CD14-positive monocyte (primary cell): ENCODE measurements at regions of chr15 and their contacts with region 1.

Region 1: DNA sequence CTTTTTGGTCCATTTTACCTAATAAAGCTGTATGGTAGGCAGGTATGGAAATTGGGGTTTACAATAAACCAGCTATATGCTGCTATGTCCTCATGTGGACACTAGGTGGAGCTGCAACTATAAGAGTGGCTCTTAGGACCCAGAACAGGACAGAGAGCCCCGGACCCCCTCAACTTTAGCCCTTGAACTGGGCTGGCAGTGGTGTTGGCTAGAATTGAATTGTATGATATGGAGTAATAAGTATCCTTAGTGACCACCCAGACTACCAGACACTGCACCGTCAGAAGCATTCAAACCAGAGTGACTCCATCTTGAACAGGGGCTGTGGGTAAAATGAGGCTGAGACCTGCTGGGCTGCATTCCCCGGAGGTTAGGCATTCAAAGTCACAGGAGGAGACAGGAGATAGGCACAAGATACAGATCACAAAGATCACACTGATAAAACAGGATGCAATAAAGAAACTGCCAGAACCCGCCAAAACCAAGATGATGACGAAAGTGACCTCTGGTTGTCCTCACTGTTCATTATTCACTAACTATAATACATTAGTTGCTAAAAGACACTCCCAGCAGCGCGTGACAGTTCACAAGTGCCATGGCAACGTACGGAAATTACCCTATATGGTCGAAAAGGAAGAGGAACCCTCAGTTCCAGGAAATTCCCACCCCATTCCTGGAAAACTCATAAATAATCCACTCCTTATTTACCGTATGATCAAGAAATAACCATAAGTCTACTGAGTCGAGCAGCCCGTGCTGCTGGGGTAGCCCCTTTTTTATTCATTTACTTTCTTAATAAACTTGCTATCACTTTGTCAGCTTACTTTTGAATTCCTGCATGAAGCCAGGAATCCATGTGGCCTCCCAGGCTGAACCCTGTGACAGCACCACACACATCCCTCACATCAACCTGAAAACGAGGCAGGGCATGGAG is 68.7 kb upstream of the BLM start:
- DNase-seq: peak; percentile 76 to 95 (median 87)
- H3K4me3 ChIP-seq: peak overlapping the region in 1 of 3 experiments; percentile 60
- H3K4me3 Mint-ChIP-seq: peak overlapping the region; percentile 68 to 85
- H3K27ac ChIP-seq: peak overlapping the region; percentile 47 to 50
- H3K27ac Mint-ChIP-seq: peak overlapping the region; percentile 88 to 95 (median 91)
- H3K4me1 ChIP-seq: peaks cover 23 to 29% of the 10 kb centered on the region in 2 donors
- H3K4me1 Mint-ChIP-seq: peaks cover 35% of the 10 kb centered on the region
- H3K27me3 ChIP-seq: no peaks in the 10 kb centered on the region
- H3K27me3 Mint-ChIP-seq: peaks cover 0 to 3% (median 1%) of the 10 kb centered on the region in 3 donors
- CTCF ChIP-seq: peak; percentile 98

Region 2: DNA sequence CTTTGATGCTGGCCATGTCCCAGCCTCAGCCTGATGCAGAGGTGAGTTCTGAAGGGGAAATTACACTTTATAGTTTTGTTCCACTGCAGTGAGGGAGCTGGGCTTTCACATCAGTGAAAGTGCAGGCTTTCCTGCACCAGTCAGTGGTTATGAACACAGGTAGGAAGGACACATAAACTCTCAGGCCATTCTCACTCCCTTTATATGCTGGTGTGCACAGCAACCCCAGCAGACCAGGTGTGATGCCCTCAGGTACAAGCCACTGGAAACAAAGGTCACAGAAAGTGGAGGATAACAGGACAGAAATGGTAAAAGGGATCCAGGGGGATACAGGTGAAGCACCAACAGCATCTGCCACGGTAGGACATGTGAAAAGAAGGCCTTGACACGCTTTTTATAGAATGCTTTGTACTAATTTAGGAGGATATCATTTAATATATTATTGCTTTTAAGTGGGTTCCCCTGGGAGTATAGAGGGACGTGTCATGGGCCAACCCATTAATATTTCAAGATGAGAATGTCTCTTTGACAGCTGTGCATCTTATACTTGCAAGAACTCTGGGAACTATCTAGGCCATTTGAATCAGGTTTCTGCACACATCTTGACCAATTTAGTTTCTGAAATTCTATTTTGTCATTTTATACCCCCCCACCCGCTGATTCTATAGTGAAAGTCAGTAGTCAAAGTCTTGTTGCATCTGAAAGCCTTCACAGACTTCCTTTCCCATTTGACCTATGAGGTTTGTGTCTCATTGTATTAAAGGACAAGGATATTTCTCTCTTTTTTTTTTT is 43.8 kb after region 1 on chr15:
- intact Hi-C with region 1: loop called (anchors 2 to 5 kb)
- DNase-seq: no peak
- H3K4me3 ChIP-seq: no peak overlapping the region
- H3K4me3 Mint-ChIP-seq: no peak overlapping the region
- H3K27ac ChIP-seq: no peak overlapping the region
- H3K27ac Mint-ChIP-seq: no peak overlapping the region
- H3K4me1 ChIP-seq: peaks cover 0 to 5% of the 10 kb centered on the region in 2 donors
- H3K4me1 Mint-ChIP-seq: peaks cover 7% of the 10 kb centered on the region
- H3K27me3 ChIP-seq: no peaks in the 10 kb centered on the region
- H3K27me3 Mint-ChIP-seq: peaks cover 0 to 2% (median 0%) of the 10 kb centered on the region in 3 donors
- CTCF ChIP-seq: no peak

Region 3: GRCh38 chr15:90780916-90781315 is 132.5 kb after region 1 on chr15:
- intact Hi-C with region 1: loop called in 1 of 2 experiments (anchors 10 kb)
- DNase-seq: peak; percentile 9 to 43 (median 27)
- H3K4me3 ChIP-seq: peak overlapping the region in 1 of 3 experiments; percentile 29
- H3K4me3 Mint-ChIP-seq: peak overlapping the region; percentile 56 to 65
- H3K27ac ChIP-seq: peak overlapping the region in 1 of 2 donors; percentile 61
- H3K27ac Mint-ChIP-seq: peak overlapping the region; percentile 25 to 92 (median 62)
- H3K4me1 ChIP-seq: peaks cover 17 to 22% of the 10 kb centered on the region in 2 donors
- H3K4me1 Mint-ChIP-seq: peaks cover 25% of the 10 kb centered on the region
- H3K27me3 ChIP-seq: no peaks in the 10 kb centered on the region
- H3K27me3 Mint-ChIP-seq: peaks cover 0 to 2% (median 0%) of the 10 kb centered on the region in 3 donors
- CTCF ChIP-seq: no peak

Region 4: GRCh38 chr15:90886041-90886614 is 237.7 kb after region 1 on chr15:
- intact Hi-C with region 1: loop called (anchors 1 to 2 kb)
- DNase-seq: peak; percentile 70 to 78 (median 71)
- H3K4me3 ChIP-seq: peak overlapping the region; percentile 69 to 99 (median 95)
- H3K4me3 Mint-ChIP-seq: peak overlapping the region; percentile 93 to 98
- H3K27ac ChIP-seq: peak overlapping the region; percentile 78 to 88
- H3K27ac Mint-ChIP-seq: peak overlapping the region; percentile 81 to 96 (median 94)
- H3K4me1 ChIP-seq: peaks cover 31 to 56% of the 10 kb centered on the region in 2 donors
- H3K4me1 Mint-ChIP-seq: peaks cover 42% of the 10 kb centered on the region
- H3K27me3 ChIP-seq: no peaks in the 10 kb centered on the region
- H3K27me3 Mint-ChIP-seq: peaks cover 0 to 1% (median 0%) of the 10 kb centered on the region in 3 donors
- CTCF ChIP-seq: peak; percentile 100

Region 5: DNA sequence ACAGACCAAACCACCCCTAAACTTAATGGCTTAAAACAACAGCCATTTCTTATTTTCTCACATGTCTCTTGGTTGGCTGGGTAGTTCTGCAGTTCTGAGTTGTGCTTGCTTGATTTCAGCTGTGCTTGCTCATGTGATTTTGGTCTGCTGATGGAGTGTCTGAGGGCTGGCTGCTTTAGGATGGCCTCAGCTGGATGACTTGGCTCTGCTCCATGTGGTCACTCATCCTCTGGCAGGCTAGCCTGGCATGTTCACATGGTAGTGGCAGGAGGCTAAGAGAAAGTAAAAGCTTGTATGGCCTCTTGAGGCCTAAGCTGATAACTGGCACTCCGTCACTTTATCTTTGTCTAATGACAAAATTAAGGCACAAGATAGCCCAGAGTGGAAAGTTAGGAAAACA is 455.7 kb after region 1 on chr15:
- intact Hi-C with region 1: no loop called
- DNase-seq: no peak
- H3K4me3 ChIP-seq: no peak overlapping the region
- H3K4me3 Mint-ChIP-seq: no peak overlapping the region
- H3K27ac ChIP-seq: no peak overlapping the region
- H3K27ac Mint-ChIP-seq: no peak overlapping the region
- H3K4me1 ChIP-seq: peaks cover 9 to 19% of the 10 kb centered on the region in 2 donors
- H3K4me1 Mint-ChIP-seq: peaks cover 13% of the 10 kb centered on the region
- H3K27me3 ChIP-seq: peaks cover 45 to 50% of the 10 kb centered on the region in 2 donors
- H3K27me3 Mint-ChIP-seq: peaks cover 46 to 62% (median 49%) of the 10 kb centered on the region in 3 donors
- CTCF ChIP-seq: no peak